AG04450 (cell line): ENCODE measurements at regions of chr1 and their contacts with region 1.

Region 1: DNA sequence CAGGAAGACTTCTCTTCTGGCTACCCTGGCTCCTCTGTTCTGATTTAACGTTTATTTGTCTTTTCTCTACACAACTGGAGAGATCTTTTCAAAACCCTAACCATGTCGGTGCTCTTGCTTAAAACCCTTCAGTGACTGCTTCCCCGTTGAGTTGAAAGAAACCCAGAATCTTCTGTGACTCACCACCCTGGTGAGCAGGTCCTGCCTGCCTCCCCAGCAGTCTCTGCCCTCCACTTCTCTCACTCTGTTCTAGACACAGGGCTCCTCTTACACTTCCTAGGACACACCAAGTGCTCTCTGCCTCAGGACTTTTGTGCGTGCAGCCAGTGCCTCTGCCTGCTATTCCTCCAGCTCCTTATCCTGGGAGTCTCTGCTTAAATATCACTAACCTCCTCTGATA is 131.4 kb downstream of the IER5 start:
- DNase-seq: no peak
- H3K4me3 ChIP-seq: no peak overlapping the region
- H3K27ac ChIP-seq: no peak overlapping the region
- H3K27me3 ChIP-seq: no peaks in the 10 kb centered on the region
- CTCF ChIP-seq: no peak

Region 2: GRCh38 chr1:181424786-181425403 is 205.0 kb after region 1 on chr1:
- CTCF ChIA-PET with region 1: interaction called, 11 read pairs
- POLR2A ChIA-PET with region 1: no interaction called
- DNase-seq: peak; percentile 29
- H3K4me3 ChIP-seq: no peak overlapping the region
- H3K27ac ChIP-seq: no peak overlapping the region
- H3K27me3 ChIP-seq: peaks cover 3% of the 10 kb centered on the region
- CTCF ChIP-seq: peak; percentile 97